A549 (cell line): ENCODE measurements at regions of chr7 and their contacts with region 1.

Region 1: DNA sequence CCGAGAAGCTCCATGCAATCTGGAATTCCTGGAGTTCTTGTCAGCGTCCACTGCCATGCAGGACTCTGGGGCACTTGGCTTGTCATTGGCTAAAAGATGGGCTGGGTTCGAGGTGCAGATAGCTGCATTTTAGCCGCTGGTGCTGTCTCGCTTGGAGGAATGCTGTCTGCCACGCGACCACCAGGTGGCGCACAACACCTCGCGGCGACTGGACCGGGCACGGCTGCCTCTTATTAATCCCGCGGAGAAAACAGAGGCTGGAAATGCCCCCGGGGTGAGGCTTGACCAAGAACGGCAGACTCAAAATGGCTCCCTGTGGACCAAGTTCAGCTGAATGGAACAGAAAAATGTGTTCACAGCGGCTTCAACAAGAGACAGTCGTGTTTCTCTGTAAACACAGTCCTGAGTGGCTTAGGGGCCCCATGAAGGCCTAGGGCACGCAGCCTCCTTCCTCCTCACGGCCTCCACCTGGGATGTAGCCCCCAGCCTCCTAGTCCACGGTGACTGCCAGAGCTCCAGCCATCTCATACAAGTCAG is 46.2 kb downstream of the AOC1 start:
- DNase-seq: peak; percentile 68 to 79
- ATAC-seq: peak; percentile 83 to 95
- H3K4me3 ChIP-seq: no peak overlapping the region
- H3K27ac ChIP-seq: no peak overlapping the region
- H3K4me1 ChIP-seq: no peaks in the 10 kb centered on the region
- CTCF ChIP-seq: peak; percentile 84
- EP300 ChIP-seq: no peak
- POLR2A ChIP-seq: no peak
- RAD21 ChIP-seq: peak; percentile 73 to 74

Region 2: GRCh38 chr7:150769768-150770167 is 128.8 kb before region 1 on chr7:
- CTCF ChIA-PET with region 1: no interaction called
- POLR2A ChIA-PET with region 1: no interaction called
- DNase-seq: no peak
- ATAC-seq: no peak
- H3K4me3 ChIP-seq: no peak overlapping the region
- H3K27ac ChIP-seq: no peak overlapping the region
- H3K4me1 ChIP-seq: no peaks in the 10 kb centered on the region
- CTCF ChIP-seq: no peak
- EP300 ChIP-seq: no peak
- POLR2A ChIP-seq: no peak
- RAD21 ChIP-seq: no peak

Region 3: GRCh38 chr7:150876817-150877526 is 21.6 kb before region 1 on chr7:
- CTCF ChIA-PET with region 1: interaction called, 19 read pairs
- POLR2A ChIA-PET with region 1: no interaction called
- DNase-seq: peak; percentile 76 to 85
- ATAC-seq: peak; percentile 79 to 92; a peak in 5 of 6 replicates
- H3K4me3 ChIP-seq: no peak overlapping the region
- H3K27ac ChIP-seq: no peak overlapping the region
- H3K4me1 ChIP-seq: no peaks in the 10 kb centered on the region
- CTCF ChIP-seq: peak; percentile 41
- EP300 ChIP-seq: no peak
- POLR2A ChIP-seq: no peak
- RAD21 ChIP-seq: peak in 1 of 2 experiments; percentile 25; a peak in 1 of 5 replicates

Region 4: GRCh38 chr7:150909200-150909995 is 10.9 kb after region 1 on chr7:
- CTCF ChIA-PET with region 1: interaction called, 54 read pairs
- POLR2A ChIA-PET with region 1: no interaction called
- DNase-seq: no peak
- ATAC-seq: no peak
- H3K4me3 ChIP-seq: no peak overlapping the region
- H3K27ac ChIP-seq: no peak overlapping the region
- H3K4me1 ChIP-seq: no peaks in the 10 kb centered on the region
- CTCF ChIP-seq: no peak
- EP300 ChIP-seq: no peak
- POLR2A ChIP-seq: no peak
- RAD21 ChIP-seq: no peak

Region 5: GRCh38 chr7:150917969-150918368 is 19.4 kb after region 1 on chr7:
- CTCF ChIA-PET with region 1: interaction called, 54 read pairs
- POLR2A ChIA-PET with region 1: no interaction called
- DNase-seq: no peak
- ATAC-seq: no peak
- H3K4me3 ChIP-seq: no peak overlapping the region
- H3K27ac ChIP-seq: no peak overlapping the region
- H3K4me1 ChIP-seq: no peaks in the 10 kb centered on the region
- CTCF ChIP-seq: no peak
- EP300 ChIP-seq: no peak
- POLR2A ChIP-seq: no peak
- RAD21 ChIP-seq: no peak